CD4-positive, alpha-beta T cell (primary cell): ENCODE measurements at regions of chr6 and their contacts with region 1.

Region 1: DNA sequence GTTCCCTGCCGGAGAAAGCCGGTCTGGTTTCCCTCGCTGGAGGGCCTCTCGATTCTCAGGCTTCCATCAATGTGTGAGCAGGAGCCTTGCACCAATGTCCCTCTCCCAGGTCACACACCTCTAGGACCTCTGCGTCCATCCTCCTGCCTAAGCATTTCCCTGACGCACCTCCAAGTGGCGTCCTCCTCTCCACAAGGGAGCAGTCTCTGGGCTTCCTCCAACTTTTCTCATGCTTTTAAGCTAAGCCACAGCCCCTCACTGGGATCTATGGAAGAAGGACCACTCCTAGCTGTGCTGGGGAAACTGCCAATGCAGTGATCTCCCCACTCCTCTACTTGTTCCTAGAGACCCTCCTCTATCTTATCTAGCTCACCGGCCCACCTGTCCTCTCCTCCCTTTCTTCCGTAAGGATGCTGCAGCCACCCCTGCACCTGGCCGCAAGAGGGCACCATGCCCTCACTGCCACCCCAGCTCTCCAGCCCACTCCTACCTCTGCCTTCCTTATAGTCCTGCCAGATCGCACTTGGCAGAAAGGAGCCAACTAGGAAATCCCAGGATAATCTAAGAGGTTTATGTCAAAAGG is 258.7 kb downstream of the LRFN2 start:
- DNase-seq: peak in 13 of 14 experiments; percentile 13 to 66 (median 40)
- ATAC-seq: peak; percentile 55
- H3K4me3 ChIP-seq: no peak overlapping the region
- H3K4me3 Mint-ChIP-seq: no peak overlapping the region
- H3K27ac ChIP-seq: no peak overlapping the region
- H3K27ac Mint-ChIP-seq: no peak overlapping the region
- H3K4me1 ChIP-seq: peaks cover 19% of the 10 kb centered on the region
- H3K4me1 Mint-ChIP-seq: no peaks in the 10 kb centered on the region
- H3K27me3 ChIP-seq: peaks cover 0 to 11% of the 10 kb centered on the region in 2 experiments
- H3K27me3 Mint-ChIP-seq: peaks cover 18% of the 10 kb centered on the region
- CTCF ChIP-seq: peak; percentile 63

Region 2: GRCh38 chr6:40587240-40588069 is 259.0 kb after region 1 on chr6 and contains the start of gene LRFN2:
- CTCF ChIA-PET with region 1: interaction called, 10 read pairs
- POLR2A ChIA-PET with region 1: no interaction called
- intact Hi-C with region 1: loop called (anchors 2 kb)
- DNase-seq: peak; percentile 41 to 79 (median 62)
- ATAC-seq: peak; percentile 88
- H3K4me3 ChIP-seq: peak within 1 kb of the TSS; percentile 50
- H3K4me3 Mint-ChIP-seq: peak within 1 kb of the TSS; percentile 84
- H3K27ac ChIP-seq: no peak within 1 kb of the TSS
- H3K27ac Mint-ChIP-seq: no peak within 1 kb of the TSS
- H3K4me1 ChIP-seq: peaks cover 15% of the 10 kb centered on the region
- H3K4me1 Mint-ChIP-seq: peaks cover 20% of the 10 kb centered on the region
- H3K27me3 ChIP-seq: peaks cover 10 to 20% of the 10 kb centered on the region in 2 experiments
- H3K27me3 Mint-ChIP-seq: peaks cover 39% of the 10 kb centered on the region
- CTCF ChIP-seq: peak; percentile 40
- total RNA-seq, gene LRFN2: not detected

Region 3: DNA sequence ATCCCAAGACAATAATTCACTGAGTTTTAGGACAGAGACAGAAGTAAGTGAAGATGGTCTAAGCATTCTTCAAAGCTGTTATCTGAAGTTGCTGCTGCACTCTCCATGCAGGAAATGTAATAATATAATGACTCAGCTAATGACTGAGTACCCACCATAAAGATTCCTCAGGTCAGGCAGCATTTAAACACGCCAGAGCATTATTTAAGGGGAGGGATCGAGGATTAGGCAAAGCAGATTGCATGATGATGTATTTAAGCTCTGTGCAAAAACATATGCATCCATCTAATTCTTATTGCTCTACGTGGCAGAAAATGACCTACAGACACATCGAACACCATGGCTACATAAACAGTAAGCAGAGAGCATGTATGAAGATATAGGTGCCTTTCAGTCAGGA is 494.1 kb after region 1 on chr6:
- CTCF ChIA-PET with region 1: no interaction called
- POLR2A ChIA-PET with region 1: no interaction called
- intact Hi-C with region 1: loop called in 1 of 2 experiments (anchors 5 kb)
- DNase-seq: no peak
- ATAC-seq: no peak
- H3K4me3 ChIP-seq: no peak overlapping the region
- H3K4me3 Mint-ChIP-seq: no peak overlapping the region
- H3K27ac ChIP-seq: no peak overlapping the region
- H3K27ac Mint-ChIP-seq: no peak overlapping the region
- H3K4me1 ChIP-seq: no peaks in the 10 kb centered on the region
- H3K4me1 Mint-ChIP-seq: no peaks in the 10 kb centered on the region
- H3K27me3 ChIP-seq: peaks cover 3 to 8% of the 10 kb centered on the region in 2 experiments
- H3K27me3 Mint-ChIP-seq: peaks cover 5% of the 10 kb centered on the region
- CTCF ChIP-seq: no peak

Region 4: GRCh38 chr6:40912158-40912946 is 583.9 kb after region 1 on chr6:
- CTCF ChIA-PET with region 1: no interaction called
- POLR2A ChIA-PET with region 1: no interaction called
- intact Hi-C with region 1: loop called in 1 of 2 experiments (anchors 5 kb)
- DNase-seq: peak in 4 of 14 experiments; percentile 4 to 43 (median 34)
- ATAC-seq: no peak
- H3K4me3 ChIP-seq: no peak overlapping the region
- H3K4me3 Mint-ChIP-seq: no peak overlapping the region
- H3K27ac ChIP-seq: no peak overlapping the region
- H3K27ac Mint-ChIP-seq: no peak overlapping the region
- H3K4me1 ChIP-seq: no peaks in the 10 kb centered on the region
- H3K4me1 Mint-ChIP-seq: no peaks in the 10 kb centered on the region
- H3K27me3 ChIP-seq: peaks cover 0 to 4% of the 10 kb centered on the region in 2 experiments
- H3K27me3 Mint-ChIP-seq: peaks cover 22% of the 10 kb centered on the region
- CTCF ChIP-seq: no peak

Region 5: GRCh38 chr6:41021832-41022231 is 693.3 kb after region 1 on chr6:
- CTCF ChIA-PET with region 1: no interaction called
- POLR2A ChIA-PET with region 1: no interaction called
- intact Hi-C with region 1: loop called in 1 of 2 experiments (anchors 5 kb)
- DNase-seq: no peak
- ATAC-seq: no peak
- H3K4me3 ChIP-seq: no peak overlapping the region
- H3K4me3 Mint-ChIP-seq: no peak overlapping the region
- H3K27ac ChIP-seq: no peak overlapping the region
- H3K27ac Mint-ChIP-seq: no peak overlapping the region
- H3K4me1 ChIP-seq: no peaks in the 10 kb centered on the region
- H3K4me1 Mint-ChIP-seq: peaks cover 4% of the 10 kb centered on the region
- H3K27me3 ChIP-seq: no peaks in the 10 kb centered on the region
- H3K27me3 Mint-ChIP-seq: no peaks in the 10 kb centered on the region
- CTCF ChIP-seq: no peak